ENCODE measurements at regions of chr10 and their contacts with region 1.

Region 1: DNA sequence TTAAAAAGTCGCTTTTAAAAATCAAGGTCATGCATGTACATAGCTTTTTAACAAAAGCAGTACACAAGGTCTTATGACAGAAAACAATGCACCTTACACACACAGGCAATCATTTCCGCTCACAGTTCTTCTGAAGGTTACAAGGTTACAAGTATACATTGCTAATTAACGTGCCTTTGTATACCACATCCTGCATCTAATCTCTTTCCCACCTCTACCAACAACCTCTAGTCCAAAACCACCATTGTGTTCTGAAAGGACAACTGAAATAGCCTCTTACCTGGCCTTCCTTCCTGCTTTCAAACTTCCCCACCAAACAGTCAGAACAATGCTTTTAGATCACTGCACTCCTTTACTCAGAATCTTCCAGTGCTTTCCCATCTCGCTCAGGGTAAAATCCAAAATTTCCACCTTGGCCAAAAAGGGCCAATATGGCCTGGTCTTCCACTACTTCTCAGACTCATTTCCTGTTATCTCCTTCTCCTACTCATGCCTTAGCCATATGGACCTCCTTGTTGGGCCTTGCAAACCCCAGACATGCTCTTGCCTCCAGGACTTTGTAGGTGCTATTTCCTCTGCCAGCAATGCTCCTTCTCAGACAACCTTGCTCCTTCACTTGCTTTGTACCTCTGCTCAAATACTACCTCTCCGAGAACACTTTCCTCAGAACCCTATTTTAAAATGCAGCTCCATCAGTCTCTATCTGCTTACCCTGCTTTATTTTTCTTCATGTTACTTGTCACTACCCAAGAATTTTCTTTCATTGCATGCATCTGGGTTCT is 205.4 kb downstream of the DNAJC1 start:
- DNase-seq: no peak
- ATAC-seq: no peak
- H3K4me3 Mint-ChIP-seq: no peak overlapping the region
- H3K27ac Mint-ChIP-seq: no peak overlapping the region
- H3K4me1 Mint-ChIP-seq: no peaks in the 10 kb centered on the region
- H3K27me3 Mint-ChIP-seq: no peaks in the 10 kb centered on the region
- CTCF ChIP-seq: no peak

Region 2: GRCh38 chr10:21813946-21814345 is 15.8 kb after region 1 on chr10:
- CTCF ChIA-PET with region 1: no interaction called
- POLR2A ChIA-PET with region 1: interaction called, 12 read pairs
- intact Hi-C with region 1: no loop called
- DNase-seq: no peak
- ATAC-seq: peak; percentile 18
- H3K4me3 Mint-ChIP-seq: no peak overlapping the region
- H3K27ac Mint-ChIP-seq: no peak overlapping the region
- H3K4me1 Mint-ChIP-seq: peaks cover 13% of the 10 kb centered on the region
- H3K27me3 Mint-ChIP-seq: no peaks in the 10 kb centered on the region
- CTCF ChIP-seq: no peak

Region 3: GRCh38 chr10:21912625-21913024 is 114.5 kb after region 1 on chr10:
- CTCF ChIA-PET with region 1: no interaction called
- POLR2A ChIA-PET with region 1: no interaction called
- intact Hi-C with region 1: no loop called
- DNase-seq: no peak
- ATAC-seq: no peak
- H3K4me3 Mint-ChIP-seq: no peak overlapping the region
- H3K27ac Mint-ChIP-seq: no peak overlapping the region
- H3K4me1 Mint-ChIP-seq: no peaks in the 10 kb centered on the region
- H3K27me3 Mint-ChIP-seq: no peaks in the 10 kb centered on the region
- CTCF ChIP-seq: no peak

Measured in activated B cell treated with CpG ODN at 0.5 μM for 24 hours (primary cell).